Left colon (tissue), 2 donors: ENCODE measurements at regions of chr12 and their contacts with region 1.

Region 1: DNA sequence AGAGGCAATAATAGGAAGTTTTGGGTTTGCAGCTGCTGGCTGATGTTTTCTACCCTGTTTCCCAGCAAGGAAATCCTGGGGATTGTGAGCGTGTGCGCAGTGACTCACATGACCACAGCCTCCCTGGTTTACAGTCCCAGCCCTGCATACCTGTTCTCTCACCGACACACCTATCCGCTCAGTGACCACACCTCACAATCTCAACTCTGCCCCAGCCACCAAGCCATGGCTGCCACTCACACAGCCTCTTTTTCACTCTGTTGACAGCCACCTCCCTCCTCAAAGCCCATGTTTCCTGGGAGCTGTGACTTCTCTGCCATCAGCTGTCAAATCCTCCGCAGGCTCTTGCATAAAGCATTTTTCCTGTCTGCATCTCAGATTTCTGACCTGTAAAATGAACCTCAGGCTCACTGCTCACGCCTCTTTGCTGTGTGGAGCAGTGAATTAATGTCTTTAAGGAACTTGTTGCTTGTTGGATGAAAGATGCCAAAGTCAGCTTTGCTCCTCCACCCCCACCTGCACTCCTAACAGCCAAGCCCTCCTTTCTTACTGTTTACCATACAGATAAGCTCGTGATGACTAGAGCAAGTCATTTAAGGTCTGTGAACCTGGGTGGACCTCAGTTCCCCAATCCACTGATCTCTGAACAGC is 43.5 kb downstream of the B4GALNT3 start:
- DNase-seq: peak; percentile 75 to 91
- ATAC-seq: peak; percentile 91

Region 2: GRCh38 chr12:459430-460258 is 43.6 kb before region 1 on chr12 and contains the start of gene B4GALNT3:
- intact Hi-C with region 1: loop called in 1 of 2 experiments (anchors 10 kb)
- DNase-seq: peak; percentile 66 to 75
- ATAC-seq: peak; percentile 74
- total RNA-seq, gene B4GALNT3: 131 to 143 TPM